Caco-2 (cell line): ENCODE measurements at regions of chr22 and their contacts with region 1.

Region 1: DNA sequence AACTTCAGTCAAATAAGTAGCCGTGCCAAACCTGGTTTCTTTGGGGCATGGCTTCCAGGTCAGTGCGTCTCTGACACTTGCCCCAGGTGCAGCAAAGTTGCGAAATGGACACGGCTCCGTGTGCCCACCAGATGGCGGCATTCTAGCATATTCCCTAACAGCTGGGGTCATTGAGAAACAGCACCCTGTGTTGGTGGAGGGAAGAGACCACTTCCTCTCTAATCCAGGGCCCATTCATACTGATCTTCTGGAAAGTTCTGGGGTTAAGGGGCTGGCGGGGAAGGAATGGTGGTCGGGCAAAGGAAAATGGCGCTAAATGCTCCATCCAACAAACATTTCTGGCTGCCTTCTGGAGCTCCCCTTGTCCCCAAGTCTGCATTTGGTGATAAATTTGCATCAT is 141.2 kb upstream of the TIMP3 start:
- DNase-seq: peak; percentile 77 to 79
- H3K4me3 ChIP-seq: no peak overlapping the region
- H3K4me3 Mint-ChIP-seq: no peak overlapping the region
- H3K27ac Mint-ChIP-seq: no peak overlapping the region
- H3K4me1 ChIP-seq: 0 out of 2 replicates have a peak, but pooled peaks cover 6% of the 10 kb centered on the region
- H3K4me1 Mint-ChIP-seq: peaks cover 6% of the 10 kb centered on the region
- H3K27me3 ChIP-seq: no peaks in the 10 kb centered on the region
- H3K27me3 Mint-ChIP-seq: no peaks in the 10 kb centered on the region
- CTCF ChIP-seq: peak; percentile 73 to 83

Region 2: DNA sequence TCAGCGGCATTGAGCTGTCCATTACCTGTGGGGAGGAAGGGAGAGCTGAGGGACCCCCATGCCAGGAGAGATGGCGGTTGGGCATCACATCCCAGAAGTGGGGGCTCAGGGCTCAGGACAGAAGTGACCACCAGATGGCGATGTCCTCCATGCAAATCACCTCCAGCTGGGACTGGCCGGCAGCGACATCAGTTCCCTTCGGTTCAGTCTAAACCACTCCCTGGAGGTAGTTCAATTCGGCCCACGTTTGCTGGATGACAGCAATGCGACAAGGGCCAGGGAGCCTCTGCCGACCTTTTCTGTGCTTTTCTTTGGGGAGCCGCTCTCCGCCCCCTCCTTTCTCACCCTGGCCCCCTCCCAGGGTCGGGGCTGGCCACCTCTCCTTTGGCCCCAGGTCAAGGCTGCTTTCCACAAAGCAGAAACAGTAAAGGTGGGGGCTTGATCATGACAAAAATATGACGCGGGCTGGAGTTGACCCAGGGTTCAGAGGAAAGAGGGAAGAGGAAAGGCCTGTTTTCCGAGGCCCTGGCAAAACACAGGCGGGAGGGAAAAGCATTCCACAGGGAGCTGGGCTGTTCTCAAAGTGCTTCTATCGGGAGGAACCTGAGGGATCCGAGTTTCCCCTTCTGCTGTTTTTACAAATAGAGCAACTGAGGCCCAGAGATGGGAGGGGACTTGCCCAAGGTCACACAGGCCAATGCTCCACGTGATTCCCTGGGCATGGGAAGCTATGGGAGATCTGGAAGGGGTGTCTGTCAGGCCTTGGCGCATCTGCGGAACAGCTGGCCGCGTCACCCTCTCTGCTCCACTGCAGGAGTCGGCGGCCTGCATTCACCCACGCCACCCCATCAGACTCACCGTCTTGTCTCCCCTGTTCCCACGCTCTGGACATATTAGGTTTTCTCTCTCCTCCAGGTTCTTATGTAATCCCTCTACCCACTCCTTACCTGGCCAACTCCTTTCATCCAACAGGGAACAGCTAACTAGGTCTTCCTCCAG is 131.0 kb before region 1 on chr22:
- CTCF ChIA-PET with region 1: interaction called, 8 read pairs
- POLR2A ChIA-PET with region 1: no interaction called
- intact Hi-C with region 1: loop called (anchors 2 kb)
- DNase-seq: peak; percentile 82 to 85
- H3K4me3 ChIP-seq: no peak overlapping the region
- H3K4me3 Mint-ChIP-seq: no peak overlapping the region
- H3K27ac Mint-ChIP-seq: peak overlapping the region; percentile 51
- H3K4me1 ChIP-seq: peaks cover 24% of the 10 kb centered on the region
- H3K4me1 Mint-ChIP-seq: peaks cover 27% of the 10 kb centered on the region
- H3K27me3 ChIP-seq: no peaks in the 10 kb centered on the region
- H3K27me3 Mint-ChIP-seq: no peaks in the 10 kb centered on the region
- CTCF ChIP-seq: peak; percentile 80

Region 3: GRCh38 chr22:32684822-32685187 is 24.5 kb after region 1 on chr22:
- CTCF ChIA-PET with region 1: no interaction called
- POLR2A ChIA-PET with region 1: no interaction called
- intact Hi-C with region 1: no loop called
- DNase-seq: peak in 1 of 2 experiments; percentile 31
- H3K4me3 ChIP-seq: no peak overlapping the region
- H3K4me3 Mint-ChIP-seq: no peak overlapping the region
- H3K27ac Mint-ChIP-seq: no peak overlapping the region
- H3K4me1 ChIP-seq: peaks cover 21% of the 10 kb centered on the region
- H3K4me1 Mint-ChIP-seq: peaks cover 29% of the 10 kb centered on the region
- H3K27me3 ChIP-seq: no peaks in the 10 kb centered on the region
- H3K27me3 Mint-ChIP-seq: no peaks in the 10 kb centered on the region
- CTCF ChIP-seq: no peak

Region 4: DNA sequence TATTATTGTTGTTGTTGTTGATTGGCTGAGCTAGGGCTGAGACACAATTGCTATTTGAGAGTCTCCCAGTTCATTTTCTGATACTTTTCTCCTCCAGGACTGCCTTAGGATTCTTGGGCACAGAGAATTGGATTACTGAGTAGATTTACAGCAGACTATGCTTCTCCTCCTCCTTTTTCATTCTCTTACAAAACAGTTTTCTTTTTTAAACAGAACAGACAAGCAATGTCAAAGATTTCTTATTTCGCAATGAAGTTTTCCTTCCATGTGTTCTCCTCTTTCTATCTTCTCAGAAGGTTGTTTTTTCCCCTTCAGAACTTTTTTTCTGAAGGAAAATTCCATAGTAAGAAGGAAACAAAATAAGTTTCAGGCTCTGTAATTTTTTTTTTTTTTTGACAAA is 121.4 kb after region 1 on chr22:
- CTCF ChIA-PET with region 1: no interaction called
- POLR2A ChIA-PET with region 1: no interaction called
- intact Hi-C with region 1: loop called (anchors 5 kb)
- DNase-seq: no peak
- H3K4me3 ChIP-seq: no peak overlapping the region
- H3K4me3 Mint-ChIP-seq: no peak overlapping the region
- H3K27ac Mint-ChIP-seq: no peak overlapping the region
- H3K4me1 ChIP-seq: peaks cover 14% of the 10 kb centered on the region
- H3K4me1 Mint-ChIP-seq: peaks cover 31% of the 10 kb centered on the region
- H3K27me3 ChIP-seq: no peaks in the 10 kb centered on the region
- H3K27me3 Mint-ChIP-seq: no peaks in the 10 kb centered on the region
- CTCF ChIP-seq: no peak

Region 5: DNA sequence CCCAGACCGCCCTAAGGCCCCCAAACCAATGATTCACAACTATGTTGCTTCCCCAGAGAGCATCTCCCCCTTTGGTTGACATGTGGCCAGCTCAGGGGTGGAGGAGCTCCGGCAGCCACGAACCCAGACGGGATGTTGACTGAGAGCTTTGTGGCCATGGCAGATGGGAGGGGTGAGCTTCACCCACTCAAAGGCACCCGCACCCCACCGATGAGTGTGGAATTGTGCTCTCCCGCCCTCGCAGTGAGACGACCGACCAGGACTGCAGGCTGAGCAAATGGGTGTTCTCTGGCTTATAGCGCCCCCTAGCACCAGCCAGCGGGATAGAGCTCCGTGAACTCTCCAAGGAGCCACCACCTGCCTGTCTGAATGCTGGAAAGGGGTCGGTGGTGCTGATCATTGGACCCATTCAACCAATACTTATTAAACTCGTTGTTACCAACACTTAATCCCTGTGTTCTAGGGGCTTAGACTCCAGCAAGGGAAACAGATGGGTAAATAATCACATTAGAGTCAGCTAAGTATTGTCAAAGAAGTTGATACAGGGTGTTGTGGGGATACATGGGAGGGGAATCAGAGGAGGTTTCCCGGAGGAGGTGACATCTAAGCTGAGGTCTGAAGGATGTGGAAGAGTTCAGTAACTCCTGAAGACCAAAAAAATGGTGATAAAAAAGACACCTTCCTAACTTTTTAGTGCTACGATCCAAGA is 136.7 kb after region 1 on chr22:
- CTCF ChIA-PET with region 1: interaction called, 17 read pairs
- POLR2A ChIA-PET with region 1: no interaction called
- intact Hi-C with region 1: loop called (anchors 1 kb)
- DNase-seq: peak; percentile 58 to 63
- H3K4me3 ChIP-seq: no peak overlapping the region
- H3K4me3 Mint-ChIP-seq: no peak overlapping the region
- H3K27ac Mint-ChIP-seq: peak overlapping the region; percentile 17
- H3K4me1 ChIP-seq: peaks cover 6% of the 10 kb centered on the region
- H3K4me1 Mint-ChIP-seq: no peaks in the 10 kb centered on the region
- H3K27me3 ChIP-seq: no peaks in the 10 kb centered on the region
- H3K27me3 Mint-ChIP-seq: no peaks in the 10 kb centered on the region
- CTCF ChIP-seq: peak; percentile 68 to 72

Region 6: DNA sequence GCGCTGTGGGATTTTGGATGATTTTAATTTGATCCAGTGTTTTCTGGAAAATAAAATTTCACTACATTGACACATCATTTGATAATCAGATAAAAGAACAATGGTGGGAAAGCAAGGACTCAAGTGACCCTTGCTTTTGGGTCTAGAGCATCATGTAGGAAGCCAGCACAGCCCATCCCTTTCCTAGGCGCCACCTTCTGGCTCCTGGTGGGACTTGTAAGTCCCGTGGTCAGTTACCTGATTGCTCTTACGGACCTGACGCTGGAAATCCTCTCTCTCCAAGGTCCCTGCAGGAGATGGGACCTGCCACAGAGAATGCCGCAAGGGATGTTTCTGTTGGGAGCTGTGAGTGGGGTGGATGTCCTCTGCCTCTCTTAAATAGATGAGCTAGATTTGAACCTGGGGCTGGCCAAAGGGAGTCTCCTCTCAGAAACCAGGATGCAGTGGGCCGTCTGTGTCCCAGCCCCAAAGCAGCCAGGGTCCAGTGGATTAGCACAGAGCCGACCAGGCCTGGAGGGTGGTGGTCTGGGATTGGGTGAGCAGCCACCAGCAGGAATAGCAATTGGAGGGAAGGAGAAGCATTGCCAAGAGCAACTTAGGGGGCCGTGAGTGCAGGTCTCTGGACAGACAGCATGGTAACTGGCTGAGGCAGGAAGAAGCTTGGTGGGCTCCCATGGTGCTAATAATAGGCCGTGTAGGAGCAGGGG is 162.9 kb after region 1 on chr22:
- CTCF ChIA-PET with region 1: no interaction called
- POLR2A ChIA-PET with region 1: no interaction called
- intact Hi-C with region 1: loop called (anchors 1 kb)
- DNase-seq: peak; percentile 67
- H3K4me3 ChIP-seq: no peak overlapping the region
- H3K4me3 Mint-ChIP-seq: no peak overlapping the region
- H3K27ac Mint-ChIP-seq: no peak overlapping the region
- H3K4me1 ChIP-seq: no peaks in the 10 kb centered on the region
- H3K4me1 Mint-ChIP-seq: peaks cover 6% of the 10 kb centered on the region
- H3K27me3 ChIP-seq: no peaks in the 10 kb centered on the region
- H3K27me3 Mint-ChIP-seq: no peaks in the 10 kb centered on the region
- CTCF ChIP-seq: peak; percentile 59 to 67

Region 7: GRCh38 chr22:32985899-32986765 is 325.8 kb after region 1 on chr22:
- CTCF ChIA-PET with region 1: interaction called, 8 read pairs
- POLR2A ChIA-PET with region 1: no interaction called
- intact Hi-C with region 1: loop called (anchors 5 kb)
- DNase-seq: peak; percentile 77 to 79
- H3K4me3 ChIP-seq: no peak overlapping the region
- H3K4me3 Mint-ChIP-seq: no peak overlapping the region
- H3K27ac Mint-ChIP-seq: peak overlapping the region; percentile 46
- H3K4me1 ChIP-seq: no peaks in the 10 kb centered on the region; the same call in 1 of the 2 replicates
- H3K4me1 Mint-ChIP-seq: peaks cover 13% of the 10 kb centered on the region
- H3K27me3 ChIP-seq: no peaks in the 10 kb centered on the region
- H3K27me3 Mint-ChIP-seq: peaks cover 5% of the 10 kb centered on the region
- CTCF ChIP-seq: peak; percentile 77 to 89

Region 8: GRCh38 chr22:33000342-33001280 is 340.3 kb after region 1 on chr22:
- CTCF ChIA-PET with region 1: no interaction called
- POLR2A ChIA-PET with region 1: no interaction called
- intact Hi-C with region 1: loop called (anchors 2 kb)
- DNase-seq: peak; percentile 50 to 73
- H3K4me3 ChIP-seq: no peak overlapping the region
- H3K4me3 Mint-ChIP-seq: no peak overlapping the region
- H3K27ac Mint-ChIP-seq: no peak overlapping the region
- H3K4me1 ChIP-seq: no peaks in the 10 kb centered on the region
- H3K4me1 Mint-ChIP-seq: no peaks in the 10 kb centered on the region
- H3K27me3 ChIP-seq: no peaks in the 10 kb centered on the region
- H3K27me3 Mint-ChIP-seq: peaks cover 5% of the 10 kb centered on the region
- CTCF ChIP-seq: peak; percentile 89 to 92